AG04449 (cell line): ENCODE measurements at regions of chr18 and their contacts with region 1.

Region 1: DNA sequence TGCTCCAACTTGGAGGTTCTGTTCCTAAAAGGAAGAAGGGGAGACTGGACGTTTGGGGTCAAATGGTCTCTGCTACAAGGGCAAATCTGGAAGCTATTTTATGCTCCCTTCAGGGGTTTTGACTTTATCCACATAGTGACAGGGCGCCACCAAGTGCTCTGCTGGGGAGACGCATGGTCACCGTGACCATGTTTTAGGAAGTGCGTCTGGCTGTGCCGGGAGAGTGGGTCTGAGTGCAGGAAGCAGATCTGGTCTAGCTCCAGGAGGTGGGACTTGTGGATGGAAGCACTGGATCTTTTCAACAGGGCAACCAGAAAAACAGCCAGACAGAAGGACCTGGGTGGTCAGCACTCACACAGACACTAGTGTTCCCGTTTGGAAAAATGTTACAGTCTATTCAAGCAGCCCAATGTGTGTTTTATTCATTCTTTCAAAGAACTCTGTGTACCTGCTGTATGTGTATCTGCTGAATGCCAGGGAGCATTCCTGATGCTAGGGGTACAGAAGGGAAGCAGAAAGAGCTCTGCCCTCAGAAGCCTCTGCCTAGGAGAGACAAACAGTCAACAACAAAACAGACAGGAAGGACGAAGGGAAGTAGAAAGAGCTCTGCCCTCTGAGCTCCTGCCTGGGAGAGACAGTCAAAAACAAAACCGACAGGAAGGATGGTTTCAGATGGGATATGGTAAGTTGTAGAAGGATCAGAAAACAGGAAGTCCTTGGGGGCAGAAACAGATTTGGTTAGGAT is 14.3 kb downstream of the IMPA2 start:
- DNase-seq: no peak
- H3K4me3 ChIP-seq: no peak overlapping the region
- CTCF ChIP-seq: peak; percentile 86

Region 2: GRCh38 chr18:11733031-11733430 is 262.6 kb before region 1 on chr18:
- CTCF ChIA-PET with region 1: interaction called, 114 read pairs
- POLR2A ChIA-PET with region 1: no interaction called
- DNase-seq: no peak
- H3K4me3 ChIP-seq: peak overlapping the region; percentile 44
- CTCF ChIP-seq: peak; percentile 93

Region 3: GRCh38 chr18:11800566-11801334 is 194.9 kb before region 1 on chr18:
- CTCF ChIA-PET with region 1: no interaction called
- POLR2A ChIA-PET with region 1: no interaction called
- DNase-seq: no peak
- H3K4me3 ChIP-seq: no peak overlapping the region
- CTCF ChIP-seq: no peak

Region 4: GRCh38 chr18:11818486-11819203 is 177.0 kb before region 1 on chr18:
- CTCF ChIA-PET with region 1: no interaction called
- POLR2A ChIA-PET with region 1: no interaction called
- DNase-seq: no peak
- H3K4me3 ChIP-seq: no peak overlapping the region
- CTCF ChIP-seq: no peak

Region 5: DNA sequence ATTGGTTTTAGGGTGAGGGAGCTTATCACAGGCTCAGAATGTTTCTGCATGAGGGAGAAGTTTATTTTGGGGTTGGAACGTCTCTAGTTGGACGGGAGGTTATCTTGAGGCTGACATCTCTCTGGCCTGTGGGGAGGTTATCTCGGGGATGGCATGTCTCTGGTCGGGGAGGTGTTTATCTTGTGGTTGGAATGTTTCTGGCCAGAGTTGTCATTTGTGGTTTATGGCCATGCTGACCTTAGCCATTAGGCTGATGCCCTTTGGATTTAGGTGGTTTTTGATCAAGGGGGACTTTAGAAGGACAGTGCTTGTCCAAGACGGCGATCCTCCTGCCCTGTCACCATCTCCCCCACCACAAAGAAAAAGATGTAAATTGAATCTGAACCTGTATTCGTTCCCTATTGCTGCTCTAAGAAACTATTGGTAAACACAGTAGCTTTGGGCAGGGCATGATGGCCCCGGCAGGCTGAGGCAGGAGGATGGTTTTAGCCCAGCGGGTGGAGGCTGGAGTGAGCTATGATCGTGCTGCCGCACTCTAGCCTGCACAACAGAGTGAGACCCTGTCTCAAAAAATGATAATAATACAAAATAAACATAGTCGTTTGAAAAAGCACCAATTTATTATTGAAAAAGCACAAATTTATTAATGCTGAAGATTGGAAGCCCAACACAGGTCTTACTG is 69.7 kb before region 1 on chr18:
- CTCF ChIA-PET with region 1: interaction called, 54 read pairs
- POLR2A ChIA-PET with region 1: no interaction called
- DNase-seq: no peak
- H3K4me3 ChIP-seq: no peak overlapping the region
- CTCF ChIP-seq: no peak

Region 6: DNA sequence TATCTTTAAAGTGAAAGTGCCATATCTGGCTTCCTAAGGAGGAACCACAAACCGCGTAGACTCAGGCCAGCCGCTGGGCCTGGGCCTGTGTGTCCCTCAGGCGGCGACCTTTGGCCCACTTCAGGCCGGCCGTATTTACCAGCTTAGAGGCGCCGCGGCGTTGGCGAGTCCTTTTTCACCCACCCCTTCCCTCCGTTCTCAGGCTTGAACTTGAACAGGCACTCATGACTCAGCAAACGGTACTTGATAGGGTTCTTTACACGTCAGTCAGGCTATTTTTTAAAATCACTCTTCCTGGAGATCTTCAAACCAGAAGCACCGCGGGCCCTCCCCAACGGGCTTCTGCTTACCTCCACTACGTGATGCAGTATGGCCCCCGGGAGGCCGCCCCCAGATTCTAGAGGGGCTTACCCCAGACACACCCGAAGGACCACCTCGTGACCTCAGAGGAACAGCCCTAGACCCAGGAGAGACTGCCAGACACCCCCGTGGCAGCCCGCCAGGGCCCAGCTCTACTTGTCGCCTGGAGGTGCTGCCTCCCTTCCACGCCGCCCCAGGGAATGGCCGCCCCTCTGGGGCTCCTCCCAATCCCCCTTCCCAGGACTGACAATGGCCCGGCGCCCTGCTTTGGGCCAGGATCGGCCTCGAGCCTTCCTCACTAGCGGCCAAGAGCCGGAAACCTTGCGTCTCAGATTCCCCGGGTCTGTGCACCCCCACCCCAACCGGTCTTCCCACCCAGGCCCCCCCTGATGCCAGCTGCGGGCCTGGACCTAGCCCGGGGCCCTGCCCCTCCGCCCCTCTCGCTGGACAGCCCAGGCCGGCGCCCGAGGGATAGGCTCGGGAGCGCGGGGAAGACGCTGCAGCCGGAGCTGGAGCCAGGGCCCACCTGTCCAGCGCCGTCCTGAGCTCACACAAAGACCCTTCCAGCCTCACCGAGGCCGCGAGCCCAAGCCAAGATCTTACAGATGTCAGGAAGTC is 48.1 kb before region 1 on chr18:
- CTCF ChIA-PET with region 1: interaction called, 809 read pairs
- POLR2A ChIA-PET with region 1: interaction called, 3 read pairs
- DNase-seq: peak; percentile 94
- H3K4me3 ChIP-seq: peak overlapping the region; percentile 37
- CTCF ChIP-seq: no peak

Region 7: GRCh38 chr18:12005538-12006487 is 10.2 kb after region 1 on chr18:
- CTCF ChIA-PET with region 1: interaction called, 28 read pairs
- POLR2A ChIA-PET with region 1: interaction called, 3 read pairs
- DNase-seq: no peak
- H3K4me3 ChIP-seq: no peak overlapping the region
- CTCF ChIP-seq: no peak

Region 8: DNA sequence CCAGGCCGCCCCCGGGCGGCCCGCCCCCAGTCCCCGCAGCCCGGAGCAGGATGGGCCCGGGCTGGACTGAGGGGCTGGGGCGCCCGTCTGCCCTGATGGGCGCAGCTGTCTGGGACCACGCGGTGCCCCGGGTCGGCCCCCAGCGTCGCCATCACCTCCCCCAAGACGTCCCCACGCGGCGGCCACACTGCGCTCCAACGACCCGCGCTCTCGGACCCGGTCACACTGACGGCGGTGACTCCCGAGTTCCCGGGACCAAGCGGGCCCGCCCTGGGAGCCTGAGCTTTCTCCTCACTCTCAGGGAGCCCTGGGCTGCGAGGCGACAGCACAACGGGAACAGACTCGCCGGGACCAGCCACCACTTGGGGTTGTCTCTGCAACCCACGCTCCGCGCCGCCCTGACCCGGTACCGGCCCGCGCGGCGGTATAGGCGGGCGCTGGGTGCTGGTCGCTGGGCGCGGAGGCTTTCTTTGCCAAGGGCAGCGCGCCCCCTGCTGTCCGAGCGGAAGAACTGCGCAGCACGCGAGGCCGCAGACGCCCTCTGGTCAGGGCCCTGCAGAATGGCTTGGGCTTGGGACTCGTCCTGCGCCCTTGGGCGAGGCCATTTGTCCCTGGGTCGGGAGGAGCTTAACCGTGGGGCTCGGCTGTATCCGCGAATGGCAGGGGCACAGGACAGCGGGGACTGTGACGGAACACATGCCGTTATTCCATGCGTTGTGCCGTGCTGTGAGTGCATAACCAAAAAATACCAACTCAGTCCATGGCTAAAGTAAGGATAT is 43.2 kb after region 1 on chr18:
- CTCF ChIA-PET with region 1: interaction called, 27 read pairs
- POLR2A ChIA-PET with region 1: no interaction called
- DNase-seq: no peak
- H3K4me3 ChIP-seq: peak overlapping the region; percentile 63
- CTCF ChIP-seq: peak; percentile 95